HCT116 (cell line): ENCODE measurements at regions of chr2 and their contacts with region 1.

Region 1: GRCh38 chr2:118186110-118186857 is 98.0 kb downstream of the INSIG2 start:
- DNase-seq: peak; percentile 63
- ATAC-seq: peak; percentile 88
- H3K4me3 ChIP-seq: peak overlapping the region; percentile 61 to 65
- H3K27ac ChIP-seq: peak overlapping the region; percentile 66
- H3K4me1 ChIP-seq: peaks cover 14 to 29% of the 10 kb centered on the region in 2 experiments; a peak in 3 of 4 replicates
- H3K27me3 ChIP-seq: no peaks in the 10 kb centered on the region
- CTCF ChIP-seq: peak in 1 of 3 experiments; percentile 14; a peak in 1 of 6 replicates
- POLR2A ChIP-seq: no peak
- RAD21 ChIP-seq: no peak

Region 2: GRCh38 chr2:118088051-118089024 is 97.9 kb before region 1 on chr2 and contains the start of gene INSIG2:
- CTCF ChIA-PET with region 1: no interaction called
- POLR2A ChIA-PET with region 1: interaction called, 3 read pairs
- RAD21 ChIA-PET with region 1: no interaction called
- intact Hi-C with region 1: loop called (anchors 2 kb)
- DNase-seq: peak; percentile 97
- ATAC-seq: peak; percentile 94
- H3K4me3 ChIP-seq: peak within 1 kb of the TSS; percentile 83 to 88
- H3K27ac ChIP-seq: peak within 1 kb of the TSS; percentile 42
- H3K4me1 ChIP-seq: peaks cover 10 to 39% of the 10 kb centered on the region in 2 experiments
- H3K27me3 ChIP-seq: no peaks in the 10 kb centered on the region
- CTCF ChIP-seq: 0 out of 6 replicates have a peak, but pooled peaks of 1 of the 3 experiments have one; percentile 15
- POLR2A ChIP-seq: peak; percentile 54
- RAD21 ChIP-seq: no peak
- total RNA-seq, gene INSIG2: 21.8 TPM

Region 3: GRCh38 chr2:118122594-118123281 is 63.5 kb before region 1 on chr2:
- CTCF ChIA-PET with region 1: no interaction called
- POLR2A ChIA-PET with region 1: interaction called, 5 read pairs
- RAD21 ChIA-PET with region 1: no interaction called
- intact Hi-C with region 1: loop called (anchors 5 kb)
- DNase-seq: peak; percentile 40
- ATAC-seq: peak; percentile 47
- H3K4me3 ChIP-seq: peak overlapping the region; percentile 10 to 46
- H3K27ac ChIP-seq: peak overlapping the region; percentile 62
- H3K4me1 ChIP-seq: peaks cover 37 to 83% of the 10 kb centered on the region in 2 experiments
- H3K27me3 ChIP-seq: no peaks in the 10 kb centered on the region
- CTCF ChIP-seq: no peak
- POLR2A ChIP-seq: no peak
- RAD21 ChIP-seq: no peak

Region 4: GRCh38 chr2:118148133-118148532 is 38.2 kb before region 1 on chr2:
- CTCF ChIA-PET with region 1: no interaction called
- POLR2A ChIA-PET with region 1: no interaction called
- RAD21 ChIA-PET with region 1: no interaction called
- intact Hi-C with region 1: loop called (anchors 2 kb)
- DNase-seq: no peak
- ATAC-seq: no peak
- H3K4me3 ChIP-seq: no peak overlapping the region
- H3K27ac ChIP-seq: no peak overlapping the region
- H3K4me1 ChIP-seq: peaks cover 0 to 3% of the 10 kb centered on the region in 2 experiments; a peak in 2 of 4 replicates
- H3K27me3 ChIP-seq: no peaks in the 10 kb centered on the region
- CTCF ChIP-seq: no peak
- POLR2A ChIP-seq: no peak
- RAD21 ChIP-seq: no peak